Activated CD4-positive, alpha-beta memory T cell treated with anti-CD3 and anti-CD28 coated beads, Interleukin-2, amount 10 ng/mL, durations not matched to agents 7 days and 5 days (primary cell): ENCODE measurements at regions of chr17 and their contacts with region 1.

Region 1: DNA sequence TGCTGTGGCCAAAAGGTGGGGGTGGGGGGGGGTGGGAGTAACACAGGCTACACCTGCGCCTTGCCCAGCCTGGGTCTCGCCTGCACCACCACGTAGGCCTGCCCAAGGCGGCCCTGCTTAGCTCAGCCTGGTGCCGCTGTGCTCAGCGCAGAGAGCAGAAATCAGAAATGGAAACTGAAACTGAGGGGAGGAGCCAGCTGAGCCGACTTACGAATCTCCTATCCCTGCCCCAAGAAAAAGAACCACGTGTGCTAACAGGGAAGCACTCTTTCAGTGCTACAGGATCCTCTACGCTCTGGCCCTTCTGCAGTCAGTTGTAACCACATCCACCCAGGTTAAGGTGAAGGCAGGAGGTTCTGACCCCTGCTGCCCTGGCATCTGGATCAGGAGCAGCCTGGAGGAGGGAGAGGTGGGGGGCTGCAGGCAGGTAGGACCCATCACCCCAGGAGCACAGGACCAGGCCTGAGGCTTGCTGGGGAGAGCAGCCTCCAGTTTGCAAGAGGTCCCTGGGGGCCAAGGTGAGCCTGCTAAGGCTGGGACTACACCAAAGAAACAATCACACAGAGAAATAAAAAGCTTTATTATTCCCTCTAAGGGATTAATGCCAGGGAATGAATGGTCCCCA is at the start of gene DHX58:
- DNase-seq: peak; percentile 87
- H3K4me3 Mint-ChIP-seq: peak within 1 kb of the TSS; percentile 91
- H3K27ac Mint-ChIP-seq: peak within 1 kb of the TSS; percentile 98
- H3K4me1 Mint-ChIP-seq: peaks cover 72% of the 10 kb centered on the region
- H3K27me3 Mint-ChIP-seq: no peaks in the 10 kb centered on the region
- total RNA-seq, gene DHX58: 97.0 to 97.3 TPM

Region 2: GRCh38 chr17:41918314-41919164 is 194.1 kb before region 1 on chr17 and contains the start of gene ACLY:
- CTCF ChIA-PET with region 1: no interaction called
- POLR2A ChIA-PET with region 1: interaction called, 12 read pairs
- DNase-seq: peak; percentile 97
- H3K4me3 Mint-ChIP-seq: peak within 1 kb of the TSS; percentile 96
- H3K27ac Mint-ChIP-seq: peak within 1 kb of the TSS; percentile 90
- H3K4me1 Mint-ChIP-seq: peaks cover 38% of the 10 kb centered on the region
- H3K27me3 Mint-ChIP-seq: no peaks in the 10 kb centered on the region
- total RNA-seq, gene ACLY: 177 to 183 TPM

Region 3: DNA sequence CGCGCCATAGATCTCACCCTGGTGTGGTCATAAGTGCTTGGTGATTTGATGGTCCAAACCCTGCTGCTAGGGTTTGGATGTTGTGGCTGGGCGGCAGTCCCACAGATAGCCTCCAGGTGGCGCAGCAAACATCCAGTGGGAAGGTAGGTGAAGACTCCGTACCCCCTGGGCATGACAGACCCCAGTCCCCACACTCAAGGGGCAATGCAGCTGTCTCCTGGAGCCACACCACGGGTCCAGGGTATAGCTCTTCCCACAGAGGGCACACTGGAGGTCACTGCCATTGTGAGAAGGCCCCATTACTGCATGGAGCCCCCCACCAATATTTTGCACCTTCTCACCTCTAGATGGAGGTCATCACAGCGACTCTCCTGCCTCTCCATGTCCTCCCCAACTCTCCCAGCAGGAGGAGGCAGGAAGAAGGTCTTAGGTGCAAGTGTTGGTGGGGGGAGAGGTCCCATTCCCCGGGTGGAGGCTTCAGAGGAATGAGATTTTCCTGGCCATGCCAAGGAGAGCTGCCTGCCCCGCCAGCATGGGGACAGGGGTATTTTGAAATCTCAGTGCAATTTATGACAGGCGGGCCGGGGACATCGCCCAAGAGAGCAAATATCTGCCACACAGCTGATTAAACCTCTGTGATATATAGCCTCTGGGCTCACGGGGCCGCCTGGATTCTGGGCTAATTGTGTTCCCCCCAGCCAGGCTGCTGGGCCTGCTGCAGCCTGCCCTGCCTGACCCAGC is 45.1 kb before region 1 on chr17:
- CTCF ChIA-PET with region 1: interaction called, 32 read pairs
- POLR2A ChIA-PET with region 1: interaction called, 9 read pairs
- DNase-seq: peak; percentile 76
- H3K4me3 Mint-ChIP-seq: no peak overlapping the region
- H3K27ac Mint-ChIP-seq: no peak overlapping the region
- H3K4me1 Mint-ChIP-seq: peaks cover 20% of the 10 kb centered on the region
- H3K27me3 Mint-ChIP-seq: peaks cover 15% of the 10 kb centered on the region

Region 4: DNA sequence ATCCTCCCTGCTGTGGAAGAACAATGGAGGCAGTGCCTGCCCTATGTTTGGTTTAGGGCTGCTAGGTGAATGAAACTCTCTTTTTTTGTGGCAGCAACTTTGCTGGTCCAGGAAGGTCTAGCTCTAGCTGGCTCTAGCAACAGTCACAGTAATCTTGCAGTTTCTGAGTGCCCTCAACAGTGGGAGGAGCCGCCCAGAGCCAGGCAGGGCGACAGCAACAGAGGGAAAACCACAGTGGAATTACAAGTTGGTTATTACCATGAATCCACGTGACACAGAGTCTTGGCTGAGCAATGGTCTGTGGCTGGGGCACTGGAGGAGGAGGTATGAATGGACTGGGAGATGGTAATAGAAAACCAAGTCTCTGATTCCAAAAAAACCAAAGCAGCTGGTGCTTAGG is 20.3 kb after region 1 on chr17:
- CTCF ChIA-PET with region 1: interaction called, 3 read pairs
- POLR2A ChIA-PET with region 1: interaction called, 10 read pairs
- DNase-seq: peak; percentile 39
- H3K4me3 Mint-ChIP-seq: no peak overlapping the region
- H3K27ac Mint-ChIP-seq: peak overlapping the region; percentile 69
- H3K4me1 Mint-ChIP-seq: peaks cover 58% of the 10 kb centered on the region
- H3K27me3 Mint-ChIP-seq: no peaks in the 10 kb centered on the region

Region 5: DNA sequence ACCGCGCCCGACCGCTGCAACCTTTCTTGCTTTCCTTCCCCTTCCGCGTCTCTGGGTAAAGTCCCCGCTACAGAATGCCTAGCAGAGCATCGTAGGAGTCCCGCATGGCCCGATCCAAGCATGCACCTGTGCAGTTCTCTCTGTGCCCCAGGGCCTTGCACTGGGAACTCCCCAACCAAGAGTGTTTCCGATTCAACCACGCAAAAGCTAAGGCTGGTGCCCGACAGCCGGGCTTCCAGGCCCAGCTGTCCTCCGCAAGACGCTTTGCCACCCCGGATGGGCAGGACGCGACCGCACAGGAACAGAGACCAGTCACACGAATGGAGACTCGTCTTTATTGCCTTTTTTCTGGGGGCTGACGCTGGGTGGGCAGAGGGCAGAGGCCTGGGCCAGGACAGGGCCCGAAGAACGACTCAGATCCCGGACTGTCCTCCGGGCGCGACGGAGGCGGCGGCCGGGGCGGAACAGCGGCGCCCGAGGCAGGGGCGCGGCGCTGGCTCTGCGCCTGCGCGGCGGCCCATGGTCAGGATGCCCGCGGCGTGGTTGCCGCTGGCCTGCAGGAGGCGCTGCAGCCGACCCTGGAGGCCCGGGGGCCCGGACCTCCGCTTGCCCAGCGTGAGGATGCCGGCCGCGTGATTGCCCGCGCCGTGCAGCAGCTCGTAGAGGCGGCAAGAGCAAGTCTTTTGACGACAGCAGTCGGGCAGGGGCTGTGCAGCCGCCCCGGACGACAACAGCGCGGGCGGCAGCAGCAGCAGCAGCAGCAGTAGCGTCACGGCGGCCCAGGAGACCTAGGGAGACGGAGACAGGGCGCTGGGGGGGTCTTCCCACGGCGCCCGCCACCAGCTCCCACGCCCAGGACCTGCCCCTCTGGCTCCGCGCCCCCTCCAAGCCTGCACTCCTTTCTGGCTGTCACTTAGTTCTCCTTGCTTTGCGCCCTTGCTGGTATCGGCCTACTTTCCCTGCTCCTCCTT is 71.4 kb after region 1 on chr17:
- CTCF ChIA-PET with region 1: interaction called, 12 read pairs
- POLR2A ChIA-PET with region 1: interaction called, 8 read pairs
- DNase-seq: peak; percentile 84
- H3K4me3 Mint-ChIP-seq: peak overlapping the region; percentile 93
- H3K27ac Mint-ChIP-seq: peak overlapping the region; percentile 85
- H3K4me1 Mint-ChIP-seq: peaks cover 50% of the 10 kb centered on the region
- H3K27me3 Mint-ChIP-seq: peaks cover 16% of the 10 kb centered on the region

Region 6: GRCh38 chr17:42281571-42282096 is 169.0 kb after region 1 on chr17:
- CTCF ChIA-PET with region 1: no interaction called
- POLR2A ChIA-PET with region 1: no interaction called
- DNase-seq: peak; percentile 4
- H3K4me3 Mint-ChIP-seq: no peak overlapping the region
- H3K27ac Mint-ChIP-seq: no peak overlapping the region
- H3K4me1 Mint-ChIP-seq: peaks cover 25% of the 10 kb centered on the region
- H3K27me3 Mint-ChIP-seq: no peaks in the 10 kb centered on the region